ENCODE measurements at regions of chr1 and their contacts with region 1.

Region 1: DNA sequence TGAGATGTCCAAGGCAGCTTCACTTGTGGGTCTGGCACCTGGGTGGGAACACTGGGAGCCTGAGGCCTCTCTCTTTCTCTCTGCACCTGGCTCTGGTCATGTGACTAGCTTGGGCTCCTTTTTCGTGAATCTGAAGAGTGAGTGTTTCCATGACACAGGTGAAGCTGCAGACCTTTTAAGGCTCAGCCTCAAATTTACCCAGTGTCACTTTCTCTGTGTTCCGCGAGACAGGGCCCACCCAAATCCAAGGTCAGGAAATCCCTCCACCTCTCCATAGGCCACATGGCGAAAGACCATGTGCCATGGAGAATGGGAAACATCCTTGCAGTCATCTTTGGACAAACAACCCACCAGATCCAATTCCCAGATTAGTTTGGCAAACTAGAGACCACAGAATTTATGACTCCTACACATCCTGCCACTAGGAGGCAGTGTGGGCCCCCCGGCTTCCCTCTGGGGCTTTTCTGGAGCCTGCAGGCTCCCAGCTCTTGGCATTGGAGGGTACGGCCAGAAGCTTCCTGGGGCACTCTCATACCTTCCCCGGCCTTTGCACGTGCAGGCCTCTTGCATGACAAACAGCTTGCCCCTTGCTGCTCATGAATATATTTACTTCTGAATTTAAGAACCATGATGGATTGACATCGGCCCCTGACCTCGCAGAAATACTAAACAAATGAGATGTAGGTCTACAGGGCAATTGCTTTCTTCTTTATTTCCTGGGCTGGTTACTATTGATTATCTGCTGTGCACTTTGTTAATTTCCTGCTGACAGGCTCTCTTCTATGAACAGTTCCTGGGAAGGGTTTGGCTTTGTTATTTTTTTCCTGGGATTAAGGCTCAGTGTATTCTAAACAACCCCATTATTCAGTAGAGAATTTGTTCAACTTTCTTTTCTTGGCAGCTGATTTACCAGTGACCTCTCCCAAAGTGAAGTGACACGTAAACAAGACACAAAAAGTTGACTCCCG is 180.7 kb downstream of the KAZN start:
- DNase-seq: peak in 1 of 2 experiments; percentile 53
- H3K4me3 ChIP-seq: no peak overlapping the region
- H3K4me3 Mint-ChIP-seq: no peak overlapping the region
- H3K27ac Mint-ChIP-seq: no peak overlapping the region
- H3K4me1 ChIP-seq: no peaks in the 10 kb centered on the region
- H3K4me1 Mint-ChIP-seq: no peaks in the 10 kb centered on the region
- H3K27me3 ChIP-seq: no peaks in the 10 kb centered on the region; the same call in 1 of the 2 replicates
- H3K27me3 Mint-ChIP-seq: no peaks in the 10 kb centered on the region
- CTCF ChIP-seq: peak; percentile 47 to 52

Region 2: GRCh38 chr1:14742181-14742980 is 36.8 kb before region 1 on chr1:
- CTCF ChIA-PET with region 1: no interaction called
- POLR2A ChIA-PET with region 1: no interaction called
- intact Hi-C with region 1: no loop called
- DNase-seq: no peak
- H3K4me3 ChIP-seq: no peak overlapping the region
- H3K4me3 Mint-ChIP-seq: no peak overlapping the region
- H3K27ac Mint-ChIP-seq: peak overlapping the region; percentile 26
- H3K4me1 ChIP-seq: no peaks in the 10 kb centered on the region
- H3K4me1 Mint-ChIP-seq: no peaks in the 10 kb centered on the region
- H3K27me3 ChIP-seq: no peaks in the 10 kb centered on the region
- H3K27me3 Mint-ChIP-seq: peaks cover 4% of the 10 kb centered on the region
- CTCF ChIP-seq: no peak

Region 3: GRCh38 chr1:15046487-15047165 is 267.4 kb after region 1 on chr1:
- CTCF ChIA-PET with region 1: interaction called, 3 read pairs
- POLR2A ChIA-PET with region 1: no interaction called
- intact Hi-C with region 1: loop called (anchors 10 kb)
- DNase-seq: peak; percentile 58 to 77
- H3K4me3 ChIP-seq: no peak overlapping the region
- H3K4me3 Mint-ChIP-seq: no peak overlapping the region
- H3K27ac Mint-ChIP-seq: no peak overlapping the region
- H3K4me1 ChIP-seq: no peaks in the 10 kb centered on the region
- H3K4me1 Mint-ChIP-seq: no peaks in the 10 kb centered on the region
- H3K27me3 ChIP-seq: no peaks in the 10 kb centered on the region
- H3K27me3 Mint-ChIP-seq: no peaks in the 10 kb centered on the region
- CTCF ChIP-seq: peak; percentile 81 to 83